Tibial artery (tissue), 4 donors: ENCODE measurements at regions of chr1 and their contacts with region 1.

Region 1: DNA sequence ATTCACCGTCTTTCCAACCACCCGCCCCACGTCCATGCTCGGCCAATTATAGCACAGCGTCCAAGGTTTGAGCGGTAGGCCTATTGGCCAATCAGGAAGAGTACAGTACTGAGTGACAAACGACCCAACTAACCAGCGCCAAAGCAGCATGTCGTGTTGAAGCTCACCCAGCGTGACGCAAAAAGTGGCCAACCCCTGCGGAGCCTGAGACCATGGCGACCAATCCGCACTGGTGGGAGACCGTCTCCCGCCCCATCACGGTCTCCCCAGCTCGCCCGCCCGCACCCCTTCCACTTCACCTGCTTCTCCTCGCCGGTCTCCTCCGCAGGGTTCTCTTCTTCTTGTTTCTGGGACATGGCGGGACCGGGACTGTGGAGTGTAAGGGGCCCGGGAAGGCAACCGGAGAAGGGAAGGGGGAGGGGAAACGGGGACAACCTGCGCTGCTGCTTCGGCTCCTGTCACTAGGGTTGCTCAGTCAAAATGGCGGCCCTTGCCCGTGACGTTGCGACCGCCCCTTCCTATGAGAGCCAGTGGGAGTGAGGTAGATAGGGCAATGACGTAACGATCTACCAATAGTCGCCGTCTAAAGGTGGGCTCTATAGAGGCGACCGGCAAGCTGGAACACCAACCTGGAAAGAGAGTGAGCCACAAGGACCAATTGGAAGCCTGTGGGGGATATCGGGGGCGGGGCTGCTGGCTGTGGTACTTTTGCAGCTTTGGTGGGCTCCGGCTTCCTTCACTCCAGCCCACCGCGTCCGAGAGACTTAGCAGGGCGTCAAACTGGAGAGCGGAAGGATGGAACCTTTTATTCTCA is at the start of gene ENSA:
- DNase-seq: peak; percentile 99
- H3K4me3 ChIP-seq: peak within 1 kb of the TSS; percentile 62 to 68
- H3K27ac ChIP-seq: peak within 1 kb of the TSS; percentile 85 to 94
- H3K4me1 ChIP-seq: peaks cover 4 to 23% (median 13%) of the 10 kb centered on the region in 4 donors
- H3K27me3 ChIP-seq: no peaks in the 10 kb centered on the region
- CTCF ChIP-seq: peak in 1 of 2 experiments; percentile 17

Region 2: DNA sequence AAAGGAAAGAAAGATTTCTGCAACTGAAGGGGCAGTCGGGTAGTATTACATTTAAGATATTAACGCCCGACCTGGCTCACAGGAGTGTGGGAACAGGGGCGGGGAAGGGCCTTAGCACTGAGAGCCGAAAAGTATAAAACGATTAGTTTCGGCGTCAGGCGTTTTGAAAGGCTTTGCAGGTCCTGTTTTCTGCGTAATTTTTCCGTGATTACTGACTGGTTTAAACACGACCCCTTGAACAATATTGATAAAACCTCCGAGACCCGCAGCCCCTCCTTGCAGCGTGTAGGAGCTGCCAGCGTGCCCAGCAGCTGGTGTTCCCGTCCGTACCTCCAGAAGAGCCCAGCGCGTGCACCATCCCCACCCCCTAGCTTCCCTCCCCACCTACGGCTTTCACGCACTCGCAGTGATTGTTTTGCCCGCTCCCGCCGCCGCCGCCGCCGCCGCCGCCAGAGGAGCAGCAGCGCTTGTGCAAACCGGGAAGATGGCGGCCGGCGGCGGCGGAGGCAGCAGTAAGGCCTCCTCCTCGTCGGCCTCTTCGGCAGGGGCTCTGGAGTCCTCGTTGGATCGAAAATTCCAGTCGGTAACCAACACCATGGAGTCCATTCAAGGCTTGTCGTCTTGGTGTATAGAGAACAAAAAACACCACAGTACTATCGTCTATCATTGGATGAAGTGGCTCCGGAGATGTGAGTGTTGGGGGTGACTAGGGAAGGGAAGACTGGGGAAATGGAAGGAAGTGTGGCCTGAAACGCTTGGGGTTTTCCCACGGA is 264.9 kb before region 1 on chr1:
- intact Hi-C with region 1: loop called (anchors 5 kb)
- DNase-seq: peak; percentile 74 to 87
- H3K4me3 ChIP-seq: peak overlapping the region; percentile 69 to 83
- H3K27ac ChIP-seq: peak overlapping the region; percentile 92 to 95
- H3K4me1 ChIP-seq: peaks cover 0 to 19% (median 0%) of the 10 kb centered on the region in 4 donors
- H3K27me3 ChIP-seq: no peaks in the 10 kb centered on the region
- CTCF ChIP-seq: peak; percentile 14 to 25

Region 3: GRCh38 chr1:150606463-150607148 is 22.7 kb before region 1 on chr1:
- intact Hi-C with region 1: no loop called
- DNase-seq: peak in 1 of 2 donors; percentile 21
- H3K4me3 ChIP-seq: no peak overlapping the region
- H3K27ac ChIP-seq: no peak overlapping the region
- H3K4me1 ChIP-seq: peaks cover 0 to 43% (median 23%) of the 10 kb centered on the region in 4 donors
- H3K27me3 ChIP-seq: no peaks in the 10 kb centered on the region
- CTCF ChIP-seq: no peak